B cell (primary cell): ENCODE measurements at regions of chr12 and their contacts with region 1.

Region 1: GRCh38 chr12:120971299-120972179 is 6.8 kb upstream of the HNF1A start:
- DNase-seq: peak; percentile 78
- ATAC-seq: peak; percentile 88
- H3K4me3 ChIP-seq: no peak overlapping the region
- H3K4me3 Mint-ChIP-seq: no peak overlapping the region
- H3K27ac ChIP-seq: no peak overlapping the region
- H3K27ac Mint-ChIP-seq: peak overlapping the region; percentile 42
- H3K4me1 ChIP-seq: peaks cover 3 to 6% of the 10 kb centered on the region in 2 donors
- H3K4me1 Mint-ChIP-seq: peaks cover 6% of the 10 kb centered on the region
- H3K27me3 ChIP-seq: peaks cover 0 to 2% (median 0%) of the 10 kb centered on the region in 4 experiments
- H3K27me3 Mint-ChIP-seq: peaks cover 4% of the 10 kb centered on the region
- CTCF ChIP-seq: peak; percentile 80

Region 2: GRCh38 chr12:120640840-120641833 is 330.4 kb before region 1 on chr12:
- CTCF ChIA-PET with region 1: interaction called, 88 read pairs
- POLR2A ChIA-PET with region 1: no interaction called
- intact Hi-C with region 1: no loop called
- DNase-seq: peak; percentile 70
- ATAC-seq: peak; percentile 56
- H3K4me3 ChIP-seq: peak overlapping the region in 3 of 5 experiments; percentile 41 to 44 (median 42)
- H3K4me3 Mint-ChIP-seq: peak overlapping the region; percentile 81
- H3K27ac ChIP-seq: no peak overlapping the region
- H3K27ac Mint-ChIP-seq: no peak overlapping the region
- H3K4me1 ChIP-seq: peaks cover 13 to 20% of the 10 kb centered on the region in 2 donors
- H3K4me1 Mint-ChIP-seq: peaks cover 13% of the 10 kb centered on the region
- H3K27me3 ChIP-seq: peaks cover 0 to 61% (median 37%) of the 10 kb centered on the region in 4 experiments
- H3K27me3 Mint-ChIP-seq: peaks cover 62% of the 10 kb centered on the region
- CTCF ChIP-seq: no peak

Region 3: GRCh38 chr12:120710031-120710804 is 261.3 kb before region 1 on chr12 and contains the start of gene UNC119B:
- CTCF ChIA-PET with region 1: interaction called, 3 read pairs
- POLR2A ChIA-PET with region 1: no interaction called
- intact Hi-C with region 1: loop called (anchors 2 kb)
- DNase-seq: peak; percentile 80
- ATAC-seq: peak; percentile 88
- H3K4me3 ChIP-seq: peak within 1 kb of the TSS; percentile 27 to 89 (median 68)
- H3K4me3 Mint-ChIP-seq: peak within 1 kb of the TSS; percentile 91
- H3K27ac ChIP-seq: peak within 1 kb of the TSS in 1 of 2 donors; percentile 71
- H3K27ac Mint-ChIP-seq: peak within 1 kb of the TSS; percentile 79
- H3K4me1 ChIP-seq: peaks cover 17 to 26% of the 10 kb centered on the region in 2 donors
- H3K4me1 Mint-ChIP-seq: peaks cover 24% of the 10 kb centered on the region
- H3K27me3 ChIP-seq: no peaks in the 10 kb centered on the region
- H3K27me3 Mint-ChIP-seq: no peaks in the 10 kb centered on the region
- CTCF ChIP-seq: no peak
- total RNA-seq, gene UNC119B: 19.2 and 22.7 TPM in 2 replicates

Region 4: GRCh38 chr12:120750806-120751205 is 220.7 kb before region 1 on chr12:
- CTCF ChIA-PET with region 1: interaction called, 14 read pairs
- POLR2A ChIA-PET with region 1: interaction called, 4 read pairs
- intact Hi-C with region 1: no loop called
- DNase-seq: no peak
- ATAC-seq: no peak
- H3K4me3 ChIP-seq: no peak overlapping the region
- H3K4me3 Mint-ChIP-seq: no peak overlapping the region
- H3K27ac ChIP-seq: no peak overlapping the region
- H3K27ac Mint-ChIP-seq: no peak overlapping the region
- H3K4me1 ChIP-seq: no peaks in the 10 kb centered on the region
- H3K4me1 Mint-ChIP-seq: peaks cover 2% of the 10 kb centered on the region
- H3K27me3 ChIP-seq: peaks cover 0 to 2% (median 0%) of the 10 kb centered on the region in 4 experiments
- H3K27me3 Mint-ChIP-seq: peaks cover 5% of the 10 kb centered on the region
- CTCF ChIP-seq: no peak

Region 5: GRCh38 chr12:120783197-120783596 is 188.3 kb before region 1 on chr12:
- CTCF ChIA-PET with region 1: interaction called, 3 read pairs
- POLR2A ChIA-PET with region 1: no interaction called
- intact Hi-C with region 1: loop called (anchors 10 kb)
- DNase-seq: no peak
- ATAC-seq: no peak
- H3K4me3 ChIP-seq: no peak overlapping the region
- H3K4me3 Mint-ChIP-seq: no peak overlapping the region
- H3K27ac ChIP-seq: no peak overlapping the region
- H3K27ac Mint-ChIP-seq: no peak overlapping the region
- H3K4me1 ChIP-seq: no peaks in the 10 kb centered on the region
- H3K4me1 Mint-ChIP-seq: no peaks in the 10 kb centered on the region
- H3K27me3 ChIP-seq: no peaks in the 10 kb centered on the region
- H3K27me3 Mint-ChIP-seq: no peaks in the 10 kb centered on the region
- CTCF ChIP-seq: no peak

Region 6: GRCh38 chr12:120856980-120857379 is 114.6 kb before region 1 on chr12:
- CTCF ChIA-PET with region 1: interaction called, 6 read pairs
- POLR2A ChIA-PET with region 1: no interaction called
- intact Hi-C with region 1: loop called (anchors 2 kb)
- DNase-seq: peak; percentile 58
- ATAC-seq: peak; percentile 43
- H3K4me3 ChIP-seq: no peak overlapping the region
- H3K4me3 Mint-ChIP-seq: peak overlapping the region; percentile 61
- H3K27ac ChIP-seq: peak overlapping the region in 1 of 2 donors; percentile 50
- H3K27ac Mint-ChIP-seq: peak overlapping the region; percentile 43
- H3K4me1 ChIP-seq: peaks cover 42 to 50% of the 10 kb centered on the region in 2 donors
- H3K4me1 Mint-ChIP-seq: peaks cover 64% of the 10 kb centered on the region
- H3K27me3 ChIP-seq: no peaks in the 10 kb centered on the region
- H3K27me3 Mint-ChIP-seq: no peaks in the 10 kb centered on the region
- CTCF ChIP-seq: peak; percentile 22

Region 7: DNA sequence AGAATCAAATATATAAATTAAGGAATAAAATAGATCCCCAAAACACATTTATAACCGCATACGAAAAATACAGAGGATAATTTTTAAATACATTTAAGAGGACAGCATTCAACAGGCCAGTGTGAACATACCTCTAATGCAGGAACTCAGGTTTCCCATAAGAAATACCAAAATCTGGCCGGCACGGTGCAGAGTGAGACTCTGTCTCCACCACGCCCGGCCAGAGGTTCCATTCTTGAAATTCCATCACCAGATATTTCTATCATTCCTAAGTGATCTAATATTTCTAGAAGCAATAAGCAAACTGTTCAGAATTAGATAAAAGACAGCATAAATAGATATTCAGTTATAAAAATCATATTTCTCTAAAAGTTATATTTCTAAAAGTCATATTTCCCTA is 97.7 kb after region 1 on chr12:
- CTCF ChIA-PET with region 1: no interaction called
- POLR2A ChIA-PET with region 1: no interaction called
- intact Hi-C with region 1: no loop called
- DNase-seq: no peak
- ATAC-seq: no peak
- H3K4me3 ChIP-seq: no peak overlapping the region
- H3K4me3 Mint-ChIP-seq: no peak overlapping the region
- H3K27ac ChIP-seq: no peak overlapping the region
- H3K27ac Mint-ChIP-seq: no peak overlapping the region
- H3K4me1 ChIP-seq: no peaks in the 10 kb centered on the region
- H3K4me1 Mint-ChIP-seq: no peaks in the 10 kb centered on the region
- H3K27me3 ChIP-seq: peaks cover 0 to 9% (median 0%) of the 10 kb centered on the region in 4 experiments
- H3K27me3 Mint-ChIP-seq: peaks cover 19% of the 10 kb centered on the region
- CTCF ChIP-seq: no peak